Dorsolateral prefrontal cortex (tissue), 120 donors: ENCODE measurements at regions of chr22 and their contacts with region 1.

Region 1: DNA sequence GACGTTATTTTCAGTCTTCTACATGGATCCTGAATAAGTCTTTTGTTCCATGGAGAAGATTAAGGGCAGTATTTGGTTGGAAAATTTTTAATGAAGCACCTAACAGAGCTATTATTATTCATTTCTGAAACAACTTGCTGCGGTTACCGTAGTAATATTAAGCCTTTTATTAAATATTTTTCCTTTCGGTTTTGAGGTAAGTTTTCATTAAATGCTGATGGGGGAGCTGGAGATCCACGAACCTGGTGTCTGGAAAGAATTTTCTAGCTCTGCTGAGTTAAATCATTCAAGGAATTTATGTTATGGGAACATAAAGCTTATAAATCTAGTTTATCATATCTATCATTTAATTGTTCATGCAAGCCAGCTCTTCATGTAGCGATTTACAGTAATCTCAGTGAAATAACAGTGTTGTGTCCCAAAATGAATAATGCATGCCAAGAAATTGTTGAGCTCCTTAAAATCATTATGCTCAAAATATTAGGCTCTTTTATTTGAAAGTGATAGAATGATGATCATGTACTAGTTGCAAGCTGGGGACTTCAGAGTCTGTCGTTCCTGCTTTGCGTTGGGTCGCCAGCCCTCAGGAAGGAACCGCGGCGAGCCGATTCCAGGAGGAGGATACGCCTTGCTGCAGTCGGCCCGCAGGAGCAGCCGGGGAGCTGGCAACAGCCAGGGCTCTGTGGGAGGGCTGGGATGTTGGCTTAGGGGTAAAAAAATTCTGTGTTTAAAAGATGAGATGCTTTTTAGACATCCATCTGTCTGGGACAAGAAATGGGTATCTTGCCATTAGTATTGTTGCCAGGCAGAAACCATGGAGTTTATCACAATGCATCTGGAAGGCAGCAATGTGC is 83.1 kb downstream of the TBC1D22A start:
- DNase-seq: peak in 7 of 10 donors; percentile 41 to 68 (median 59)
- H3K4me3 ChIP-seq: peak overlapping the region in 57 of 59 donors; percentile 1 to 62 (median 38)
- H3K27ac ChIP-seq: peak overlapping the region in 56 of 59 donors; percentile 3 to 92 (median 70)
- H3K27me3 ChIP-seq: no peaks in the 10 kb centered on the region
- CTCF ChIP-seq: peak in 55 of 56 donors; percentile 36 to 79 (median 61)

Region 2: GRCh38 chr22:46815896-46816731 is 29.4 kb before region 1 on chr22:
- intact Hi-C with region 1: no loop called
- DNase-seq: peak in 1 of 10 donors; percentile 30
- H3K4me3 ChIP-seq: no peak overlapping the region
- H3K27ac ChIP-seq: peak overlapping the region in 49 of 59 donors; percentile 1 to 82 (median 56)
- H3K27me3 ChIP-seq: no peaks in the 10 kb centered on the region
- CTCF ChIP-seq: peak in 1 of 56 donors; percentile 6

Region 3: DNA sequence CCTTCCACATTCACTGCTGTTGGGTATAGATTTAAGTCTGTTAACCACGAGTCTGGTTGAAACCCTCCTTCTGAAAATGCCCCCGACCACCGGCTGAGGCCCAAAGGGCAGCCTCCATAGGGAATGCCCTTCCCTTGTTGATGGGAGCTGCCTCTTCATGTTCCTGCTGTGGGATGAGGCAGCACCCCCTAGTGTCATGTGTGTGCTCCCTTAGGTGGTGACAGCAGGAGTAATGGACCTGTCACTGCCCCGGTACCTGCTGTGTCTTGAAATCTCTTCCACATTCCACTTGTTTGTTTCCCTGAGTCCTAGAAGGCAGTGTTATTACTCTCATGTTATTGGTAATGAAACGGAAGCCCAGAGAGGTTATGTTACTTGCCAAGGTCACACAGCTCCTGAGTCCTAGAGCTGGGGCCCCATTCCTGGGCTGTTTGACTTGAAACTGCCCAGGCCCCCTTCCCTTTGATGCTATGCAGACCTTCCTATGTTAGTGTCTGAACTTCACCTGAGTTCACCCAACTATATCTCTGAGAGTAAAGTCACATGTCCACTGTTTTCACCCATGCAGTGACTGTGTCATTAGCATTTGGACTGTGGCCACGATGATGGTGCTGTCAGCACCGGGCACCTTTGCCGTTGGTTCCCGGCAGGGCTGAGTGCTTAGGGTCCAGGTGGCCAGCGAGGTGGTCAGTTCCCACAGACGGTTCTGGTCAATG is 151.2 kb after region 1 on chr22:
- intact Hi-C with region 1: no loop called
- DNase-seq: no peak
- H3K4me3 ChIP-seq: no peak overlapping the region
- H3K27ac ChIP-seq: no peak overlapping the region
- H3K27me3 ChIP-seq: no peaks in the 10 kb centered on the region
- CTCF ChIP-seq: peak in 5 of 56 donors; percentile 10 to 21 (median 17)

Region 4: GRCh38 chr22:47168900-47169800 is 323.6 kb after region 1 on chr22:
- intact Hi-C with region 1: loop called in 1 of 2 experiments (anchors 5 kb)
- DNase-seq: peak in 7 of 10 donors; percentile 19 to 43 (median 30)
- H3K4me3 ChIP-seq: no peak overlapping the region
- H3K27ac ChIP-seq: no peak overlapping the region
- H3K27me3 ChIP-seq: no peaks in the 10 kb centered on the region
- CTCF ChIP-seq: peak in 25 of 56 donors; percentile 9 to 59 (median 28)